PC-9 (cell line): ENCODE measurements at regions of chr6 and their contacts with region 1.

Region 1: GRCh38 chr6:68634726-68635411 is at the start of gene ADGRB3:
- DNase-seq: peak in 1 of 2 experiments; percentile 7
- H3K4me3 ChIP-seq: no peak within 1 kb of the TSS; the same call in 1 of the 2 replicates
- H3K27ac ChIP-seq: no peak within 1 kb of the TSS
- H3K4me1 ChIP-seq: no peaks in the 10 kb centered on the region
- H3K27me3 ChIP-seq: peaks cover 15% of the 10 kb centered on the region; the same call in 1 of the 2 replicates
- CTCF ChIP-seq: no peak
- total RNA-seq, gene ADGRB3: not detected in 2 replicates

Region 2: GRCh38 chr6:67068781-67069180 is 1566.1 kb before region 1 on chr6:
- CTCF ChIA-PET with region 1: no interaction called
- POLR2A ChIA-PET with region 1: no interaction called
- intact Hi-C with region 1: loop called (anchors 5 kb)
- DNase-seq: no peak
- H3K4me3 ChIP-seq: no peak overlapping the region
- H3K27ac ChIP-seq: no peak overlapping the region
- H3K4me1 ChIP-seq: no peaks in the 10 kb centered on the region
- H3K27me3 ChIP-seq: no peaks in the 10 kb centered on the region
- CTCF ChIP-seq: no peak

Region 3: DNA sequence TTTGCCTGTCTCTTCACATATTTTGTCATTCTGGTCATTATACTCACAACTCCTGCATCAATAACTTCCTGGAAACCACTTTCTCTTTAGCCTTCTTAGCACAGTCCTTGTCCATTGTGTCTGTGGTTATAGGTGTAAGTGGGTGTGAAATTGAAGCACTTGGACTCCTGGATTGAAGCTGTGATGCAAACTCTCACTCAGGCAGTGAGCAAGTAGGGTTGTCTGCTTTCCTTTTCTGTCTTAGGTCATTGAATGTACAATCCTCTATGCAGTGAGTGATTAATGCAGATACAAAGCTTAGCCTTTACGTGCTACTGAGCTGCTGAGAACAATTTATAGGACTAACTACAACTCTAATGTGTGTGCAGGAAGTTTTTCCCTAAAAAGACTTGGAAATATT is 55.0 kb after region 1 on chr6:
- CTCF ChIA-PET with region 1: no interaction called
- POLR2A ChIA-PET with region 1: no interaction called
- intact Hi-C with region 1: no loop called
- DNase-seq: no peak
- H3K4me3 ChIP-seq: no peak overlapping the region
- H3K27ac ChIP-seq: no peak overlapping the region
- H3K4me1 ChIP-seq: no peaks in the 10 kb centered on the region
- H3K27me3 ChIP-seq: no peaks in the 10 kb centered on the region
- CTCF ChIP-seq: no peak

Region 4: GRCh38 chr6:68967549-68968300 is 332.9 kb after region 1 on chr6:
- CTCF ChIA-PET with region 1: no interaction called
- POLR2A ChIA-PET with region 1: no interaction called
- intact Hi-C with region 1: loop called (anchors 2 kb)
- DNase-seq: peak in 1 of 2 experiments; percentile 38
- H3K4me3 ChIP-seq: no peak overlapping the region
- H3K27ac ChIP-seq: no peak overlapping the region
- H3K4me1 ChIP-seq: no peaks in the 10 kb centered on the region
- H3K27me3 ChIP-seq: no peaks in the 10 kb centered on the region
- CTCF ChIP-seq: peak; percentile 87

Region 5: GRCh38 chr6:69593706-69594105 is 958.8 kb after region 1 on chr6:
- CTCF ChIA-PET with region 1: no interaction called
- POLR2A ChIA-PET with region 1: no interaction called
- intact Hi-C with region 1: no loop called
- DNase-seq: no peak
- H3K4me3 ChIP-seq: no peak overlapping the region
- H3K27ac ChIP-seq: no peak overlapping the region
- H3K4me1 ChIP-seq: no peaks in the 10 kb centered on the region
- H3K27me3 ChIP-seq: no peaks in the 10 kb centered on the region
- CTCF ChIP-seq: no peak

Region 6: GRCh38 chr6:70107852-70108629 is 1473.2 kb after region 1 on chr6:
- CTCF ChIA-PET with region 1: interaction called, 3 read pairs
- POLR2A ChIA-PET with region 1: no interaction called
- intact Hi-C with region 1: loop called (anchors 2 kb)
- DNase-seq: no peak
- H3K4me3 ChIP-seq: no peak overlapping the region
- H3K27ac ChIP-seq: no peak overlapping the region
- H3K4me1 ChIP-seq: no peaks in the 10 kb centered on the region
- H3K27me3 ChIP-seq: 0 out of 2 replicates have a peak, but pooled peaks cover 4% of the 10 kb centered on the region
- CTCF ChIP-seq: peak; percentile 76